PC-3 (cell line): ENCODE measurements at regions of chr2 and their contacts with region 1.

Region 1: DNA sequence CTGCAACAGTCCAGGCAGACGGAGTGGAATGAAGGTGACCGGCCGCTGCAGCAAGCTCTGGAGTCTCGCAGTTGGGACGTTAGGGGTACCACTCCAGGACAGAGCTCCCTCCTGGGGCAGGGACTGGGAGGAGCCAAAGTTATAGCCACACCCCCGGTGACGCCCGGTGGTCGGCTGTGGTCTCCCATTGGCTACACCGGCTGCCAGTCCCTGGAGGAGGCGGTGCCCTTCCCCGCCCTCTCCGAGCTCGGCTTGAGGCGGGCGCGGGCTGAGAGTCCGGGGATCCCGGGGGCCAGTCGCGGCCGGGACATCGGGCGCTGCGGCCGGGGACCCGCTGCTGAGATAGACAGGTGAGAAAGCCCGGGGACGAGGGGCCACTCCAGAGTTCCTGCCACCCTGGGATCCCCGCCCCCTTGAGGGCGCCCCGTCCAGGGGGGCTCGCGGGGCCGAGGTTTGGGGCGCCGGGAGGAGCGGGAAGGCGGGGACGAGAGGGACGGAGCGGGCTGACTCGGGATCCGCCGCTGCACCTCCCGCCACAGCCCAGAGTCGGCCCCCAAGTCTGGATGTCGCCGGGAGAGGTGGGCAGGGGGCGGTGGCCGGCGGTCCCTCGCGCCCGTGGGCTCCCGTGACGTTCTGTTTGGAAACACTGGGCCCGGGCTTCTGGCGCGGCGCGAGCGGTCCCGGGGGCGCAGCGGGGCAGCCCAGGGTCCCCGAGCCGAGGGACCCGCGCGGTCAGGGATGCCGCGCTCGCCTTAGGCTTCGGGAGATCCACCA is at the start of gene PLEKHH2:
- DNase-seq: peak; percentile 86
- ATAC-seq: peak; percentile 87
- H3K4me3 ChIP-seq: peak within 1 kb of the TSS; percentile 76
- H3K27ac ChIP-seq: no peak within 1 kb of the TSS
- H3K4me1 ChIP-seq: peaks cover 22% of the 10 kb centered on the region
- H3K27me3 ChIP-seq: no peaks in the 10 kb centered on the region
- CTCF ChIP-seq: no peak
- total RNA-seq, gene PLEKHH2: 1.9 and 2.7 TPM in 2 replicates

Region 2: DNA sequence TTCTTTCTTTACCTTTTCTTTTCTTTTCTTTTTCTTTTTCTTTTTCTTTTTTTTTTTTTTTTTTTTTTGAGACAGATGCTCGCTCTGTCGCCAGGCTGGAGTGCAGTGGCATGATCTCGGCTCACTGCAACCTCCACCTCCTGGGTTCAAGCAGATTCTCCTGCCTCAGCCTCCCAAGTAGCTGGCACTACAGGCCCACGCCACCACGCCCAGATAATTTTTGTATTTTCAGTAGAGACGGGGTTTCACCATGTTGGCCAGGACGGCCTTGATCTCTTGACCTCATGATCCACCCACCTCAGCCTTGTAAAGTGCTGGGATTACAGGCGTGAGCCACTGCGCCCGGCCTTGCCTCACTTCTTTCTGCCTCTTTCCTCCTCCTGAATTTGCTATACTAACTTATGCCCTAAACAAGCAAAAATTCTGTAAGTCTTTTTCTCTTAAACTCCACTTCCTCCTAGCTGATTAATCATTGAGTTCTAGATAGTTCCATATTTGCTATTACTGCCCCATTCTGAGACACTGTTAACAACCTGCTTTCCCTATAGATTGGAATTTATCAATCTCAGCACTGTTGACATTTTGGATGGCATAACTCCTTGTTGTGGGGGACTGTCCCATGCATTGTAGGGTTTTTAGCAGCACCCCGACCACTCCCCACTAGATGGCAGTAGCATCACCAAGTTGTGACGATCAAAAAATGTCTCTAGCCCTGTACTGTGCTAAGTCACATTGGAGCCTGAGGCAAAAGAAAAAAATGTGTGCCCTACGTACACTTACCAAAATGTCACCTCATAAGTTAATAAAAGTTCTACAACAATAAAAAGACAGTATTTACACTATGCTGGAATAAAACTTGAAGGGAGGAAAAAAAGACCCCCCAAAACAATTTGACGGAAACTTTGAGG is 25.0 kb before region 1 on chr2:
- CTCF ChIA-PET with region 1: no interaction called
- POLR2A ChIA-PET with region 1: interaction called, 4 read pairs
- intact Hi-C with region 1: loop called (anchors 1 kb)
- DNase-seq: peak; percentile 89
- ATAC-seq: peak; percentile 71
- H3K4me3 ChIP-seq: no peak overlapping the region
- H3K27ac ChIP-seq: no peak overlapping the region
- H3K4me1 ChIP-seq: peaks cover 10% of the 10 kb centered on the region
- H3K27me3 ChIP-seq: no peaks in the 10 kb centered on the region
- CTCF ChIP-seq: peak; percentile 89

Region 3: GRCh38 chr2:43707255-43708015 is 70.2 kb after region 1 on chr2:
- CTCF ChIA-PET with region 1: interaction called, 7 read pairs
- POLR2A ChIA-PET with region 1: no interaction called
- intact Hi-C with region 1: loop called (anchors 2 kb)
- DNase-seq: peak; percentile 86
- ATAC-seq: peak; percentile 94
- H3K4me3 ChIP-seq: no peak overlapping the region
- H3K27ac ChIP-seq: peak overlapping the region; percentile 87
- H3K4me1 ChIP-seq: peaks cover 37% of the 10 kb centered on the region
- H3K27me3 ChIP-seq: no peaks in the 10 kb centered on the region
- CTCF ChIP-seq: no peak

Region 4: GRCh38 chr2:43759195-43759594 is 122.0 kb after region 1 on chr2:
- CTCF ChIA-PET with region 1: interaction called, 3 read pairs
- POLR2A ChIA-PET with region 1: no interaction called
- intact Hi-C with region 1: loop called (anchors 1 kb)
- DNase-seq: peak; percentile 91
- ATAC-seq: peak; percentile 96
- H3K4me3 ChIP-seq: no peak overlapping the region
- H3K27ac ChIP-seq: peak overlapping the region; percentile 96
- H3K4me1 ChIP-seq: peaks cover 42% of the 10 kb centered on the region
- H3K27me3 ChIP-seq: no peaks in the 10 kb centered on the region
- CTCF ChIP-seq: no peak

Region 5: GRCh38 chr2:43877782-43878464 is 240.7 kb after region 1 on chr2:
- CTCF ChIA-PET with region 1: interaction called, 12 read pairs
- POLR2A ChIA-PET with region 1: no interaction called
- intact Hi-C with region 1: no loop called
- DNase-seq: peak; percentile 81
- ATAC-seq: peak; percentile 87
- H3K4me3 ChIP-seq: no peak overlapping the region
- H3K27ac ChIP-seq: no peak overlapping the region
- H3K4me1 ChIP-seq: no peaks in the 10 kb centered on the region
- H3K27me3 ChIP-seq: no peaks in the 10 kb centered on the region
- CTCF ChIP-seq: peak; percentile 94